Body of pancreas (tissue), 4 donors: ENCODE measurements at regions of chr10 and their contacts with region 1.

Region 1: GRCh38 chr10:38007991-38008390 is 2.5 kb upstream of the ZNF33A start:
- DNase-seq: no peak
- ATAC-seq: no peak
- H3K4me3 ChIP-seq: no peak overlapping the region
- H3K27ac ChIP-seq: no peak overlapping the region
- H3K4me1 ChIP-seq: peaks cover 8% of the 10 kb centered on the region
- H3K27me3 ChIP-seq: no peaks in the 10 kb centered on the region
- CTCF ChIP-seq: no peak
- POLR2A ChIP-seq: no peak

Region 2: DNA sequence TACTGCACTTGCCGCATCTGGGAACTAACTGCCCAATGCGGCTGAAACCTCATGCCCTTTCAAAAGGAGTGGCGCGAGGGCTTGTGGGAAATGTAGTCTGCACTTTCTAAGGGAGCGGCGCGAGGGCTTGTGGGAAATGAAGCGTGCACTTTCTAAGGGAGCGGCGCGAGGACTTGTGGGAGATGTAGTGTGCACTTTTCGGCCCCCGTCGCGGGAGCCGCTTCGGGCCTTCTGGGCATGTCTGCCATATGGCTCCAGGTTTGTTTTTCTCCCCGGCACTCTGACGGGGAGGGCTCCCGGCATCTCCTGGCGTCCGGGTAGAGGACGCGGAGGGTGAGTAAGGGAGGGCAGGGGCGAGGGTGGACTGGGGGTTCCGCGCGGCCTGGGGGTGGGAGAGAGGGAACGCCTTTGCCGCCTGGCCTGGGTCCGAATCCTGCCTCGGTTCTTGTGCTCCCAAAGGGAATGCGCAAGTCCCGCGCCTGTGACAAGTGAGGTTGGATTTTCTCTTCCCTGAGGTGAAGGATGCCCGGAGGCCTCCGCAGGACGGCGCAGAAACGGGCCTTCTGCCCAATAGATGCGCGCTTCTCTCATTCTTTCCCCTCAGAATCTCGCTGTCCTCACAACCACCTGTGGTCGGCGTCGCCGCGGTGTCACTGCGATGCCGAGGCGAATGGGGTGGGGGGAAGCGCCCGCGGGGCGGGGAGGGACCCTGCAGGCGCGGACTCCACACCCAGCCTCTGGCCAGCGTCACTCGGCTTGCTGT is 86.3 kb after region 1 on chr10 and contains the start of gene ZNF37A:
- intact Hi-C with region 1: loop called (anchors 10 kb)
- DNase-seq: peak; percentile 92 to 97 (median 96)
- ATAC-seq: peak; percentile 98
- H3K4me3 ChIP-seq: peak within 1 kb of the TSS; percentile 88 to 90
- H3K27ac ChIP-seq: peak within 1 kb of the TSS; percentile 86 to 91 (median 88)
- H3K4me1 ChIP-seq: peaks cover 18% of the 10 kb centered on the region
- H3K27me3 ChIP-seq: no peaks in the 10 kb centered on the region
- CTCF ChIP-seq: peak in 2 of 7 experiments; percentile 7 to 12
- POLR2A ChIP-seq: peak; percentile 52 to 82 (median 81)
- total RNA-seq, gene ZNF37A: 21.4 to 23.3 TPM